Naive thymus-derived CD4-positive, alpha-beta T cell (primary cell): ENCODE measurements at regions of chr3 and their contacts with region 1.

Region 1: GRCh38 chr3:160413613-160414248 is 14.3 kb downstream of the SMC4 start:
- DNase-seq: peak; percentile 41 to 75 (median 60)
- ATAC-seq: peak; percentile 94
- H3K4me3 ChIP-seq: no peak overlapping the region
- H3K4me3 Mint-ChIP-seq: no peak overlapping the region
- H3K27ac ChIP-seq: no peak overlapping the region
- H3K27ac Mint-ChIP-seq: peak overlapping the region in 1 of 9 donors; percentile 33
- H3K4me1 ChIP-seq: no peaks in the 10 kb centered on the region
- H3K4me1 Mint-ChIP-seq: peaks cover 2 to 48% (median 9%) of the 10 kb centered on the region in 7 donors
- H3K27me3 ChIP-seq: no peaks in the 10 kb centered on the region
- H3K27me3 Mint-ChIP-seq: no peaks in the 10 kb centered on the region

Region 2: GRCh38 chr3:159884661-159885402 is 528.9 kb before region 1 on chr3:
- CTCF ChIA-PET with region 1: no interaction called
- POLR2A ChIA-PET with region 1: no interaction called
- intact Hi-C with region 1: loop called in 1 of 2 experiments (anchors 1 kb)
- DNase-seq: peak in 3 of 9 donors; percentile 3 to 16 (median 9)
- ATAC-seq: peak; percentile 57
- H3K4me3 ChIP-seq: no peak overlapping the region
- H3K4me3 Mint-ChIP-seq: no peak overlapping the region
- H3K27ac ChIP-seq: no peak overlapping the region
- H3K27ac Mint-ChIP-seq: no peak overlapping the region
- H3K4me1 ChIP-seq: no peaks in the 10 kb centered on the region
- H3K4me1 Mint-ChIP-seq: no peaks in the 10 kb centered on the region
- H3K27me3 ChIP-seq: no peaks in the 10 kb centered on the region
- H3K27me3 Mint-ChIP-seq: peaks cover 0 to 24% (median 15%) of the 10 kb centered on the region in 5 donors

Region 3: DNA sequence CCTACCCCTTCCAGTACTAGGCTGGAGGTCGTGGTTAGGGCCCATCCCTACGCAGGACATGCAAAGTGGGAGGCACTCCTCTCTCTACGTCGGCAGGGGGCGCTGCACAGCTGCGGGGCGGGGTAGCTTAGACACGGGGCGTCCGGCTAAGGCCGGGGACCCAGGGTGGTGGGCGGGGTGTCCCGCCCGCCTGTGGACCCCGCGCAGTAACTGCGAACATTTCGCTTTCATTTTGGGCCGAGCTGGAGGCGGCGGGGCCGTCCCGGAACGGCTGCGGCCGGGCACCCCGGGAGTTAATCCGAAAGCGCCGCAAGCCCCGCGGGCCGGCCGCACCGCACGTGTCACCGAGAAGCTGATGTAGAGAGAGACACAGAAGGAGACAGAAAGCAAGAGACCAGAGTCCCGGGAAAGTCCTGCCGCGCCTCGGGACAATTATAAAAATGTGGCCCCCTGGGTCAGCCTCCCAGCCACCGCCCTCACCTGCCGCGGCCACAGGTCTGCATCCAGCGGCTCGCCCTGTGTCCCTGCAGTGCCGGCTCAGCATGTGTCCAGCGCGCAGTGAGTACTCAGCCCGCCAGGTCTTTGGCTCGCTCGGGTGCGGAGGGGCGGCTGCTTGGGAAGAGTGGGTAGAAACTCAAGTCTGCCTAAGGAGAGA is 425.0 kb before region 1 on chr3 and contains the start of gene IL12A:
- CTCF ChIA-PET with region 1: interaction called, 9 read pairs
- POLR2A ChIA-PET with region 1: interaction called, 3 read pairs
- intact Hi-C with region 1: loop called (anchors 1 to 2 kb)
- DNase-seq: peak; percentile 59 to 85 (median 75)
- ATAC-seq: peak; percentile 98
- H3K4me3 ChIP-seq: peak within 1 kb of the TSS; percentile 56
- H3K4me3 Mint-ChIP-seq: peak within 1 kb of the TSS; percentile 82 to 89 (median 84)
- H3K27ac ChIP-seq: peak within 1 kb of the TSS; percentile 32
- H3K27ac Mint-ChIP-seq: peak within 1 kb of the TSS in 5 of 9 donors; percentile 58 to 65 (median 62)
- H3K4me1 ChIP-seq: peaks cover 6 to 9% of the 10 kb centered on the region in 2 donors
- H3K4me1 Mint-ChIP-seq: peaks cover 6 to 33% (median 15%) of the 10 kb centered on the region in 7 donors
- H3K27me3 ChIP-seq: no peaks in the 10 kb centered on the region
- H3K27me3 Mint-ChIP-seq: peaks cover 0 to 24% (median 10%) of the 10 kb centered on the region in 5 donors
- total RNA-seq, gene IL12A: 0.40 to 1.8 (median 1.3) TPM

Region 4: GRCh38 chr3:160163229-160163878 is 250.4 kb before region 1 on chr3:
- CTCF ChIA-PET with region 1: interaction called, 10 read pairs
- POLR2A ChIA-PET with region 1: no interaction called
- intact Hi-C with region 1: loop called in 1 of 2 experiments (anchors 1 kb)
- DNase-seq: peak in 4 of 9 donors; percentile 1 to 19 (median 7)
- ATAC-seq: no peak
- H3K4me3 ChIP-seq: no peak overlapping the region
- H3K4me3 Mint-ChIP-seq: no peak overlapping the region
- H3K27ac ChIP-seq: no peak overlapping the region
- H3K27ac Mint-ChIP-seq: no peak overlapping the region
- H3K4me1 ChIP-seq: no peaks in the 10 kb centered on the region
- H3K4me1 Mint-ChIP-seq: peaks cover 0 to 3% (median 0%) of the 10 kb centered on the region in 7 donors
- H3K27me3 ChIP-seq: no peaks in the 10 kb centered on the region
- H3K27me3 Mint-ChIP-seq: peaks cover 0 to 33% (median 17%) of the 10 kb centered on the region in 5 donors

Region 5: DNA sequence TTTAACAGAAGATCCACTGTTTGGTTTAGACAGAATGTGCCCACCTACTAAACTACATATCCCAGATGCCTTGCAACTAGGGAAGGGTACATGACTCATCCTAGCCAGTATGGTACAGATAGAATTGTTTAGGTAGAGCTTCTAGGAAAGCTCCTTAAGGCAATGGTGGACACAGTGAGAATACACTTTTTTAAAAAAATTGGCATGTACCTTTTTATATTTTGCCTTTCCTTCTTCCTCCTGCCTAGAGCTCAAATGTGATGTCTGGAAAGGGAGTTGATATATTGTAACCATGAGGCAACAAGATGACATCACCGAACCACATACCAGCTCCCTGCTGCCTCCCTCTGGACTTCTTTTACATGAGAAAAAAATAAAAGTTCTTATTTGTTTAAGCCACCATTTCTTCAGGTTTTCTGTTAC is 202.9 kb before region 1 on chr3:
- CTCF ChIA-PET with region 1: no interaction called
- POLR2A ChIA-PET with region 1: no interaction called
- intact Hi-C with region 1: no loop called
- DNase-seq: no peak
- ATAC-seq: peak; percentile 26
- H3K4me3 ChIP-seq: no peak overlapping the region
- H3K4me3 Mint-ChIP-seq: no peak overlapping the region
- H3K27ac ChIP-seq: no peak overlapping the region
- H3K27ac Mint-ChIP-seq: no peak overlapping the region
- H3K4me1 ChIP-seq: no peaks in the 10 kb centered on the region
- H3K4me1 Mint-ChIP-seq: no peaks in the 10 kb centered on the region
- H3K27me3 ChIP-seq: no peaks in the 10 kb centered on the region
- H3K27me3 Mint-ChIP-seq: peaks cover 12 to 33% (median 27%) of the 10 kb centered on the region in 5 donors

Region 6: GRCh38 chr3:160343132-160343531 is 70.6 kb before region 1 on chr3:
- CTCF ChIA-PET with region 1: interaction called, 4 read pairs
- POLR2A ChIA-PET with region 1: no interaction called
- intact Hi-C with region 1: loop called in 1 of 2 experiments (anchors 2 kb)
- DNase-seq: peak in 2 of 9 donors; percentile 1 to 12
- ATAC-seq: no peak
- H3K4me3 ChIP-seq: no peak overlapping the region
- H3K4me3 Mint-ChIP-seq: no peak overlapping the region
- H3K27ac ChIP-seq: no peak overlapping the region
- H3K27ac Mint-ChIP-seq: no peak overlapping the region
- H3K4me1 ChIP-seq: no peaks in the 10 kb centered on the region
- H3K4me1 Mint-ChIP-seq: no peaks in the 10 kb centered on the region
- H3K27me3 ChIP-seq: no peaks in the 10 kb centered on the region
- H3K27me3 Mint-ChIP-seq: no peaks in the 10 kb centered on the region

Region 7: DNA sequence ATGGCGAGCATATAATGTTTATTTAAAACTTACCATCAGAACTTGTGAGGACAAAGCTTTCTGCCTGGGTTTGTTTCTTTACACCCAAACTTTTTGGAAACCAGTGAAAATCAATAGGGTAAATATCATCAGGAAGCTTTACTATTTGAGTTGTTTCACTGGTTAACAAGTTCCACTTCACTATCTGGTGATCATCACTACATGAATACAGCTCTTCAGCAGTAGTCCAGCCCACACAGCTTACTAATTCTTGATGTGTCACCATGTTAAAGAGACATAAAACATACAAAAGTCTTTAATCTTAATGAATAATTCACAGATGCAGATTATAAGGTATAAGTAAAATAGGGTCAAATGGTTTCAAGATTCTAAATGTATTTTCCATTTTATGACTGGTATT is 32.3 kb before region 1 on chr3:
- CTCF ChIA-PET with region 1: no interaction called
- POLR2A ChIA-PET with region 1: no interaction called
- intact Hi-C with region 1: no loop called
- DNase-seq: no peak
- ATAC-seq: no peak
- H3K4me3 ChIP-seq: no peak overlapping the region
- H3K4me3 Mint-ChIP-seq: no peak overlapping the region
- H3K27ac ChIP-seq: no peak overlapping the region
- H3K27ac Mint-ChIP-seq: no peak overlapping the region
- H3K4me1 ChIP-seq: no peaks in the 10 kb centered on the region
- H3K4me1 Mint-ChIP-seq: peaks cover 0 to 20% (median 10%) of the 10 kb centered on the region in 7 donors
- H3K27me3 ChIP-seq: no peaks in the 10 kb centered on the region
- H3K27me3 Mint-ChIP-seq: no peaks in the 10 kb centered on the region

Region 8: DNA sequence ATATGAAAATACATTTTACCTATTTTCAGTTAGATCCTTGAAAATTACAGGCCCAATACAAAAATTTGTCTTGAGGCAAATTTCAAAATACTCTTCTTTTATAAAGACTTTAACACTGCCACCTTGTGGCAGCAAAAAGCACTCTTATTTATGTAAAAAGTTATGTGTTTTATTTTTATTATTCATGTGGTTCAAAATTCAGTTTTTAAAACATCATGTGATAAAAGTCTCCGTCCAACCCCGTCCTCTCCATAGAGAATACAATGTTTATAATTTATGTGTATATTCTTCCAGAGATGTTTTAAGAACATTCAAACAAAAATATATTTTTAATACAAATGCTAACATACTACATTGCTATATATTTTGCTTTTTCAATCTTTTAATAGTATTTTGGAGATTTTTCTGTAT is 72.7 kb after region 1 on chr3:
- CTCF ChIA-PET with region 1: no interaction called
- POLR2A ChIA-PET with region 1: no interaction called
- intact Hi-C with region 1: loop called (anchors 1 to 5 kb)
- DNase-seq: peak in 5 of 9 donors; percentile 4 to 27 (median 18)
- ATAC-seq: no peak
- H3K4me3 ChIP-seq: no peak overlapping the region
- H3K4me3 Mint-ChIP-seq: peak overlapping the region in 2 of 10 donors; percentile 65 to 76
- H3K27ac ChIP-seq: no peak overlapping the region
- H3K27ac Mint-ChIP-seq: no peak overlapping the region
- H3K4me1 ChIP-seq: no peaks in the 10 kb centered on the region
- H3K4me1 Mint-ChIP-seq: peaks cover 0 to 10% (median 5%) of the 10 kb centered on the region in 7 donors
- H3K27me3 ChIP-seq: no peaks in the 10 kb centered on the region
- H3K27me3 Mint-ChIP-seq: peaks cover 0 to 14% (median 5%) of the 10 kb centered on the region in 5 donors

Region 9: GRCh38 chr3:160999276-160999675 is 585.5 kb after region 1 on chr3:
- CTCF ChIA-PET with region 1: no interaction called
- POLR2A ChIA-PET with region 1: no interaction called
- intact Hi-C with region 1: no loop called
- DNase-seq: peak in 2 of 9 donors; percentile 4 to 26
- ATAC-seq: no peak
- H3K4me3 ChIP-seq: no peak overlapping the region
- H3K4me3 Mint-ChIP-seq: no peak overlapping the region
- H3K27ac ChIP-seq: no peak overlapping the region
- H3K27ac Mint-ChIP-seq: peak overlapping the region in 2 of 9 donors; percentile 9 to 23
- H3K4me1 ChIP-seq: no peaks in the 10 kb centered on the region
- H3K4me1 Mint-ChIP-seq: peaks cover 0 to 6% (median 4%) of the 10 kb centered on the region in 7 donors
- H3K27me3 ChIP-seq: no peaks in the 10 kb centered on the region
- H3K27me3 Mint-ChIP-seq: no peaks in the 10 kb centered on the region